A673 (cell line): ENCODE measurements at regions of chr15 and their contacts with region 1.

Region 1: GRCh38 chr15:94324117-94324826 is 92.9 kb downstream of the MCTP2 start:
- DNase-seq: peak; percentile 77
- H3K4me3 ChIP-seq: no peak overlapping the region
- H3K27ac ChIP-seq: no peak overlapping the region
- H3K4me1 ChIP-seq: peaks cover 24% of the 10 kb centered on the region
- H3K27me3 ChIP-seq: no peaks in the 10 kb centered on the region
- CTCF ChIP-seq: peak; percentile 92

Region 2: GRCh38 chr15:93030430-93031105 is 1293.7 kb before region 1 on chr15:
- CTCF ChIA-PET with region 1: no interaction called
- POLR2A ChIA-PET with region 1: no interaction called
- intact Hi-C with region 1: loop called (anchors 5 kb)
- DNase-seq: peak; percentile 79
- H3K4me3 ChIP-seq: no peak overlapping the region
- H3K27ac ChIP-seq: no peak overlapping the region
- H3K4me1 ChIP-seq: peaks cover 37% of the 10 kb centered on the region
- H3K27me3 ChIP-seq: no peaks in the 10 kb centered on the region
- CTCF ChIP-seq: peak; percentile 90

Region 3: GRCh38 chr15:93035953-93036800 is 1288.1 kb before region 1 on chr15:
- CTCF ChIA-PET with region 1: interaction called, 15 read pairs
- POLR2A ChIA-PET with region 1: no interaction called
- intact Hi-C with region 1: no loop called
- DNase-seq: peak; percentile 72
- H3K4me3 ChIP-seq: no peak overlapping the region
- H3K27ac ChIP-seq: no peak overlapping the region
- H3K4me1 ChIP-seq: no peaks in the 10 kb centered on the region
- H3K27me3 ChIP-seq: no peaks in the 10 kb centered on the region
- CTCF ChIP-seq: peak; percentile 87

Region 4: GRCh38 chr15:93997084-93997918 is 327.0 kb before region 1 on chr15:
- CTCF ChIA-PET with region 1: no interaction called
- POLR2A ChIA-PET with region 1: no interaction called
- intact Hi-C with region 1: loop called (anchors 10 kb)
- DNase-seq: peak; percentile 48
- H3K4me3 ChIP-seq: no peak overlapping the region
- H3K27ac ChIP-seq: no peak overlapping the region
- H3K4me1 ChIP-seq: no peaks in the 10 kb centered on the region
- H3K27me3 ChIP-seq: no peaks in the 10 kb centered on the region
- CTCF ChIP-seq: peak; percentile 84

Region 5: GRCh38 chr15:94163999-94164807 is 160.1 kb before region 1 on chr15:
- CTCF ChIA-PET with region 1: interaction called, 33 read pairs
- POLR2A ChIA-PET with region 1: no interaction called
- intact Hi-C with region 1: loop called (anchors 1 kb)
- DNase-seq: peak; percentile 76
- H3K4me3 ChIP-seq: no peak overlapping the region
- H3K27ac ChIP-seq: no peak overlapping the region
- H3K4me1 ChIP-seq: no peaks in the 10 kb centered on the region
- H3K27me3 ChIP-seq: no peaks in the 10 kb centered on the region
- CTCF ChIP-seq: peak; percentile 93